IMR-90 (cell line): ENCODE measurements at regions of chr19 and their contacts with region 1.

Region 1: GRCh38 chr19:21020298-21021227 is at the start of gene ZNF430:
- DNase-seq: peak; percentile 90
- ATAC-seq: peak; percentile 97
- H3K4me3 ChIP-seq: peak within 1 kb of the TSS; percentile 82
- H3K27ac ChIP-seq: peak within 1 kb of the TSS; percentile 81
- H3K4me1 ChIP-seq: 0 out of 2 replicates have a peak, but pooled peaks cover 3% of the 10 kb centered on the region
- H3K27me3 ChIP-seq: no peaks in the 10 kb centered on the region
- CTCF ChIP-seq: no peak
- POLR2A ChIP-seq: peak; percentile 71; the same call in 1 of the 2 replicates
- RAD21 ChIP-seq: no peak
- total RNA-seq, gene ZNF430: 7.2 and 8.4 TPM in 2 replicates

Region 2: GRCh38 chr19:20923077-20923871 is 97.3 kb before region 1 on chr19 and contains the start of gene ZNF85:
- CTCF ChIA-PET with region 1: no interaction called
- POLR2A ChIA-PET with region 1: no interaction called
- dilution Hi-C with region 1: no loop called
- in situ Hi-C with region 1: no loop called
- intact Hi-C with region 1: loop called (anchors 5 kb)
- DNase-seq: peak; percentile 88
- ATAC-seq: peak; percentile 97
- H3K4me3 ChIP-seq: peak within 1 kb of the TSS; percentile 90
- H3K27ac ChIP-seq: peak within 1 kb of the TSS; percentile 72
- H3K4me1 ChIP-seq: no peaks in the 10 kb centered on the region
- H3K27me3 ChIP-seq: no peaks in the 10 kb centered on the region
- CTCF ChIP-seq: no peak
- POLR2A ChIP-seq: peak; percentile 66; the same call in 1 of the 2 replicates
- RAD21 ChIP-seq: no peak; the same call in 1 of the 2 replicates
- total RNA-seq, gene ZNF85: 5.9 and 11.4 TPM in 2 replicates

Region 3: GRCh38 chr19:21141787-21142464 is 121.4 kb after region 1 on chr19 and contains the start of gene ZNF431:
- CTCF ChIA-PET with region 1: no interaction called
- POLR2A ChIA-PET with region 1: no interaction called
- dilution Hi-C with region 1: no loop called
- in situ Hi-C with region 1: no loop called
- intact Hi-C with region 1: loop called (anchors 10 kb)
- DNase-seq: peak; percentile 93
- ATAC-seq: peak; percentile 99
- H3K4me3 ChIP-seq: peak within 1 kb of the TSS; percentile 94
- H3K27ac ChIP-seq: peak within 1 kb of the TSS; percentile 86
- H3K4me1 ChIP-seq: no peaks in the 10 kb centered on the region
- H3K27me3 ChIP-seq: no peaks in the 10 kb centered on the region
- CTCF ChIP-seq: no peak
- POLR2A ChIP-seq: peak; percentile 88
- RAD21 ChIP-seq: no peak
- total RNA-seq, gene ZNF431: 4.5 and 6.1 TPM in 2 replicates

Region 4: GRCh38 chr19:21202865-21203494 is 182.4 kb after region 1 on chr19:
- CTCF ChIA-PET with region 1: no interaction called
- POLR2A ChIA-PET with region 1: interaction called, 24 read pairs
- dilution Hi-C with region 1: no loop called
- in situ Hi-C with region 1: no loop called
- intact Hi-C with region 1: no loop called
- DNase-seq: peak; percentile 14
- ATAC-seq: peak; percentile 78
- H3K4me3 ChIP-seq: no peak overlapping the region
- H3K27ac ChIP-seq: no peak overlapping the region
- H3K4me1 ChIP-seq: no peaks in the 10 kb centered on the region
- H3K27me3 ChIP-seq: no peaks in the 10 kb centered on the region
- CTCF ChIP-seq: peak; percentile 47
- POLR2A ChIP-seq: no peak
- RAD21 ChIP-seq: peak; percentile 60